A549 (cell line): ENCODE measurements at regions of chr11 and their contacts with region 1.

Region 1: DNA sequence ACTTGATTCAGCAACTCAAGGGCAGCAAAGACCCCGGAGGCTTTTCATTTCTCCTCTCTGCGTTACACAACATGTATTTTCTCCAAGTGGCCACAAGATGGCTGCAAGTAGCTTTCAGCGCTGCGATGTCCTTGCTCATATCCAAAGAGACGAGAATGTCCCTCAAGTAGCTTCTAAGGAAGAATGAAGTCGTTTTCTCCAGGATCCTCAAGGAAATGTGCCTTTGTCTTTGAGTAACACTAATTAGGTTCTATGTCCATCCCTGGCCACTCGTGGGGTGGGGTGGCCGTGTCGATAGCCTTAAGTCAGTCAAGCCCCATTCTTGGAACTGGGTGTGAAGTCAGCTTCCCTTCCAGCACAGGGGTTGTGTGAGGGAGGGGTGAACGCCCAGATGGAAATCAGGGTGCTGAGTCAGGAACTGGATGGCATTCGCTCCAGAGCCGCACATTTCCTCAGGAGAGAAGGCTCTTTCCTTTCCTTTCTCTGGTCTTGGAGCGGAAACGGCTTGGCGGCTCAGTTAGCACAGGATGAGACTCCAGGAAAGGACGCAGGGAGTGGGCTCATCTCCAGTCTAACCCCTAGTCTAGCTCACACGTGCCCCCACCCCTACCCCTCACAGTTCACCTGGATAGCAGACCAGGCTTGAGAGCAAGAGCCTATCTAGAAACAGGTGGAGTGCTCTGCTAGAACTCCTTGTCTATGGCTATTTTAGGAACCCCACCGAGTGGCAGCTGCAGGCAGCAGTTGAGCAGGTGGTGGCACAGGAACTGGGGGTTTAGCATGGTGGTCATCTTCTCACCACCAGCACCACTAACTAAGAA is 44.3 kb downstream of the NNMT start:
- DNase-seq: peak; percentile 16 to 85
- ATAC-seq: peak; percentile 93 to 95
- H3K4me3 ChIP-seq: no peak overlapping the region; the same call in 2 of the 3 replicates
- H3K27ac ChIP-seq: peak overlapping the region; percentile 70 to 87
- H3K4me1 ChIP-seq: peaks cover 7% of the 10 kb centered on the region; the same call in 1 of the 3 replicates
- CTCF ChIP-seq: peak; percentile 69
- EP300 ChIP-seq: no peak
- POLR2A ChIP-seq: no peak
- RAD21 ChIP-seq: peak; percentile 77 to 78

Region 2: DNA sequence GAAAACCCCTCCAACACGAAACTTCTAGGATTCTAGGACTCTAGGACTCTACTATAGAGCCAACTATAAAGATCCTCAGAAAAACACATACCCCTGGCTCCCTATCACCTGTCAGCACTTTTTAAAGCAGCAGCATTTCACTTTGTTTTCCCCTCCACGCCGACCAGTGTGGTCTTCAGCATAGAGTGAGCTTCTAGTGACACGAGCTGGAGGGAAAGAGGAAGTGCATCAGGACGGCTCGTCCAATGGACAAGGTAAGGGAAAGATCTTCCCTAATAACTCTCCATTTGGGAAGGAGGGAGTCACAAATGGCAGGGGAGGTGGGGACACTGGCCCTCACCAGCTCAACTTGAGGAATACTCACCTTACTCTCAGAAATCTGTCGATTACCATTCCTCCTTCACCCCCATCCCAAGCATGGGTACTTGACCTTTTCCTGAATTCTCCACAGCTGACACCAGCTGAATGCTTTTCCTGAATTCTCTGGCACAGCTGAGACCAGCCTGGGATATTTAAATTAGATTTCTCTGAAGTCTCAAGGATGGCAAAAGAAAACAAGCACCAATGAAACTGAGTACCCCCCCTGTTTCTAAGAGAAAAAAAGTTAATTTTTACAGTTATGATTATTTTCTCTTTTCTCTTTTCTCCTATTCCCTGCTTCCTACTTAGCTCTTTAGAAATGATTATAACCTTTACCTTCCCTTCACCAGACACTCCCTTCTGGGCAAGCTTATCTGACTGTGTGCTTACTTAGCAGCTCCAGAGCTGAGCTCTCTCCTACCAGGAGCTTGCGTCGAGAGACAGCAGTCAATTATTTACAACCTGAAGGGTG is 77.6 kb before region 1 on chr11:
- CTCF ChIA-PET with region 1: no interaction called
- POLR2A ChIA-PET with region 1: no interaction called
- DNase-seq: peak; percentile 26 to 50
- ATAC-seq: peak; percentile 85 to 90; a peak in 5 of 6 replicates
- H3K4me3 ChIP-seq: no peak overlapping the region
- H3K27ac ChIP-seq: no peak overlapping the region
- H3K4me1 ChIP-seq: 0 out of 3 replicates have a peak, but pooled peaks cover 5% of the 10 kb centered on the region
- CTCF ChIP-seq: peak; percentile 55; the same call in 2 of the 3 replicates
- EP300 ChIP-seq: no peak
- POLR2A ChIP-seq: no peak
- RAD21 ChIP-seq: peak; percentile 70 to 76

Region 3: GRCh38 chr11:114762408-114762807 is 421.9 kb after region 1 on chr11:
- CTCF ChIA-PET with region 1: interaction called, 14 read pairs
- POLR2A ChIA-PET with region 1: no interaction called
- DNase-seq: peak; percentile 15 to 56
- ATAC-seq: peak; percentile 94
- H3K4me3 ChIP-seq: no peak overlapping the region
- H3K27ac ChIP-seq: no peak overlapping the region
- H3K4me1 ChIP-seq: no peaks in the 10 kb centered on the region
- CTCF ChIP-seq: peak; percentile 50
- EP300 ChIP-seq: no peak
- POLR2A ChIP-seq: no peak
- RAD21 ChIP-seq: peak; percentile 72